ENCODE measurements at regions of chr9 and their contacts with region 1.

Region 1: DNA sequence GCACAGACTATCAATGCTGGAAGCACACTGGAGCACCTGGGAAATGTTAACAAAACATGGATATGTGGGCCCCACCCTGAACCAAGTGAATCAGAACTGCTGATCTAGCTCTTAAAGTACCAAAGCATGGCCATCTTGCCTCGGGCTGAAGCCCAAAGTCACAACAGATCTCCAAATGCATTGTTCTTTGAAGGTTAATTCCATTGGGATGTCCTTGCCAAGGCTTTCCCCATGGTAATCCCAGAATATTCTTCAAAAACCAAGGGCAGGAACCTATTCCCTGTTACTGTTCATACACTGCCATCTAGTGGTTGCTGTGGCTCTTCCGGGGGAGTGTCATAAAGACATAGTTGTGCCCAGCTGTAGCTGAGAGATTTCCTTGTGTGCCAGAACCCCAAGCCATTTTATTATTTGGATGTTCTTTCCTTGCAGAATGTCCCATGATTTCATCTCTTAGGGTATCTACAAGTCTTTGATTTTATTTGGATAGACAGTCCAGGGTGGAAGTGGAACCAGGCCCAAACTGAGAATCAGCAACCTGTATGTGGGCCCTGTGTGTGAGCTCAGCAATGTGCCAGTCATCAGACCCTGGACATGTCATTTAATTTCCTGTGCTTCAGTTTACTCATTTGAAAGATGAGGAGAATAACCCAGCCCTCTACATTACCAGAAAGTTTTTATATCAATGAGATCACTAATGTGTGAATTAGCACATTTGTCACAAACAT is 290.0 kb downstream of the ACTL7B start:
- DNase-seq: peak in 1 of 2 donors; percentile 47
- ATAC-seq: peak; percentile 87 to 94 (median 92)
- H3K4me3 ChIP-seq: no peak overlapping the region
- H3K27ac ChIP-seq: no peak overlapping the region
- H3K4me1 ChIP-seq: peaks cover 0 to 5% (median 0%) of the 10 kb centered on the region in 9 donors
- H3K27me3 ChIP-seq: peaks cover 0 to 8% (median 0%) of the 10 kb centered on the region in 7 donors
- CTCF ChIP-seq: peak; percentile 70 to 93 (median 86)

Region 2: DNA sequence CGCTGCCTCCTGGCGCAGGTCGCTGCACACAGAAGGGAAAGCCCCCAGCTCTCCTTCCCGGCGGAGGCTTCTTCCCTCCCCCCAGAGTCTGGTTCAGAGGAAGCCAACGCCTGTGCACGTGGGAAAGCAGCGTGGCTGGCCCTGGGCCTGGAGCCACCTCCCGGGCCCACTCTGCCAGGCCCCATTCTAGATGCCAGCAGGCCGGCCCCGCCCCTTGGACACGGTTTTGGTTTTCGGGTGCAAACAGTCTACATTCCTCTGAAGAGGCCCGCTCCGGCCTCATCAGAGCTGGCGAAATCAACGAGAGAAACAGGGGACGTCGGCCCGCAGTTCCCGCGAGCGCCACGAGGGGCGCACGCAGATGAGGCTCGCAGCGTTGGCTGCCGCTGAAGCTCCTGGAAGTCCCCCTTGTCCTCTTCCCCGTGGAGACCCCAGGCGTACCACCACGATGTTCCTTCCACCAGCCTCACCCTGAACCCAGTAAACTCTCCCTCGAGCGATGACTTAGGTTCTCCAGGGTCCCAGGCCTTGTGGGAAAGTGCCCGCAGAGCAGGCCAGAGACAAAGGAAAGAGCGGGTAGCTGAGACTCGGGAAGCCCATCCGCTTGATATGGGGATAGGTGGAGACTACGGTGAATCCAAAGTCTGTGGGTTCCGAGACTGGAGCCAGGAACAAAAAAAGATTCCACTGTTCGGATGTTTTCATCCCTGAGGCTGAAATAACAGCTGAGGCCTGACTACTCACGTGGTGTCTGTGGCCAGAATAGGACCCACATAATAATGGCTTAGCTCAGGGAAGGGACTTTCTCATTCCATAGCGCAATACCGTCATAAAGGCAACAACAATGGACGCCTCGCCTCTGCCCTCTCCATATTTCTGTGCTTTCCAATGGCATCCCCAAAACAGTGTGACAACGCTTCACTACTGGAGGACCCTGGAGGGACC is 1140.4 kb before region 1 on chr9:
- intact Hi-C with region 1: loop called in 3 of 10 experiments (anchors 10 kb)
- DNase-seq: peak; percentile 76 to 78
- ATAC-seq: peak; percentile 82 to 92 (median 90)
- H3K4me3 ChIP-seq: peak overlapping the region in 8 of 10 donors; percentile 13 to 49 (median 36)
- H3K27ac ChIP-seq: peak overlapping the region in 7 of 10 donors; percentile 1 to 67 (median 42)
- H3K4me1 ChIP-seq: peaks cover 0 to 28% (median 9%) of the 10 kb centered on the region in 9 donors
- H3K27me3 ChIP-seq: no peaks in the 10 kb centered on the region
- CTCF ChIP-seq: peak; percentile 91 to 99 (median 96)

Region 3: GRCh38 chr9:107465467-107466451 is 1100.1 kb before region 1 on chr9:
- intact Hi-C with region 1: loop called in 7 of 10 experiments (anchors 1 to 5 kb)
- DNase-seq: peak; percentile 55 to 80
- ATAC-seq: peak; percentile 97 to 99 (median 98)
- H3K4me3 ChIP-seq: peak overlapping the region; percentile 30 to 76 (median 64)
- H3K27ac ChIP-seq: peak overlapping the region in 6 of 10 donors; percentile 28 to 66 (median 53)
- H3K4me1 ChIP-seq: peaks cover 0 to 14% (median 6%) of the 10 kb centered on the region in 9 donors
- H3K27me3 ChIP-seq: peaks cover 0 to 20% (median 0%) of the 10 kb centered on the region in 7 donors
- CTCF ChIP-seq: peak; percentile 82 to 97 (median 94)

Region 4: DNA sequence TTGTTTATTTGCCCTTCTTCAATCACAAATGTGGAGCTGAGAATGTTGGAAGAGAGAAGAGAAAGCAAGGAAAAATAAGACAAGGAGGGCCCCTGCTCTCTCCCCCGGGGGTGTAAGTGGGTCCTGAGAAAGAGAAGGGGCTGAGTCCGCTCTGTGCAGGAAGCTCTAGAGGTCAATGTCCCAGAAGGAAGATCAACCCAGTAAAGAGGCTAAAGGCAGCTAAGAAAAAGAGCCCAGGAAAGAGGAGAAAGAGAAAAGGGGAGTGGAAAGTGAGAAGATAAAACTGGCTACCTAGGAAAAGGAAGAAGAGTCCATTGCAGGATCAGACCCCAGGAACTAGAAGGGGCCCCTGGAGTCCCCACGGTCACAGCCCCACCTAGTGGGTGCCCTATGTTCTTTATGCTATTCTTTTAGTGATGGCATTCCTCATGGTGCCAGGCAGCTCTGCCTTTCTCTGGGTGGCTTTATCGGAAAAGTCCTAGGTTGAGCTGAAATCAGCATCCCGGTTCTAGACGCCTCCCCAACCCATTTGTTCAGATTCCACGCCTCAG is 293.4 kb before region 1 on chr9:
- intact Hi-C with region 1: loop called in 3 of 10 experiments (anchors 10 kb)
- DNase-seq: peak; percentile 43 to 46
- ATAC-seq: peak; percentile 69 to 93 (median 86)
- H3K4me3 ChIP-seq: peak overlapping the region in 6 of 10 donors; percentile 1 to 42 (median 24)
- H3K27ac ChIP-seq: peak overlapping the region in 7 of 10 donors; percentile 10 to 71 (median 52)
- H3K4me1 ChIP-seq: peaks cover 0 to 23% (median 8%) of the 10 kb centered on the region in 9 donors
- H3K27me3 ChIP-seq: no peaks in the 10 kb centered on the region
- CTCF ChIP-seq: peak; percentile 49 to 76 (median 65)

Region 5: GRCh38 chr9:108297073-108297472 is 268.7 kb before region 1 on chr9:
- intact Hi-C with region 1: loop called in 1 of 10 experiments (anchors 10 kb)
- DNase-seq: no peak
- ATAC-seq: peak in 6 of 8 donors; percentile 22 to 70 (median 38)
- H3K4me3 ChIP-seq: no peak overlapping the region
- H3K27ac ChIP-seq: peak overlapping the region in 1 of 10 donors; percentile 26
- H3K4me1 ChIP-seq: peaks cover 0 to 13% (median 0%) of the 10 kb centered on the region in 9 donors
- H3K27me3 ChIP-seq: peaks cover 0 to 4% (median 0%) of the 10 kb centered on the region in 7 donors
- CTCF ChIP-seq: no peak

Region 6: DNA sequence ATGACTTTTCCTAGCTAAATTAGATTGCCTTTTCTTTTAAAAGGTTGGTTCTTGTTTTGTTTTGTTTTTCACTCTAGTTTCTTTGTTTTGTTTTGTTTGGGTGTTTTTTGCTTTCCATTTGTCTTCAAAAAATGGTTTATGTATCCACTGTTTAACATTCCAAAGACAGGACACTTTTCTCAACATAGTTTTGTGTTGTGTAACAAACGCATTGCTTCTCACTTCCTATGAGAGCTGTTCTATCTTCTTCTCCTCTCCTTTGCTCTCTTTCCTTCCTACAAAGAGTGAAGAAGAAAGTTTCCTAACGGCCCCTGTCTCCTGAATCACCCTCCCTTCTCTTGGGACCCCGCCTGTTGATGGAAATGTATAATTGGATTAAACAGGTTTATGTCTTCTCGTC is 249.7 kb before region 1 on chr9:
- intact Hi-C with region 1: no loop called
- DNase-seq: no peak
- ATAC-seq: no peak
- H3K4me3 ChIP-seq: no peak overlapping the region
- H3K27ac ChIP-seq: no peak overlapping the region
- H3K4me1 ChIP-seq: no peaks in the 10 kb centered on the region
- H3K27me3 ChIP-seq: no peaks in the 10 kb centered on the region
- CTCF ChIP-seq: no peak

Region 7: GRCh38 chr9:108473211-108474112 is 92.4 kb before region 1 on chr9:
- intact Hi-C with region 1: loop called in 1 of 10 experiments (anchors 5 kb)
- DNase-seq: no peak
- ATAC-seq: peak in 5 of 8 donors; percentile 45 to 78 (median 53)
- H3K4me3 ChIP-seq: no peak overlapping the region
- H3K27ac ChIP-seq: no peak overlapping the region
- H3K4me1 ChIP-seq: peaks cover 3 to 35% (median 18%) of the 10 kb centered on the region in 9 donors
- H3K27me3 ChIP-seq: no peaks in the 10 kb centered on the region
- CTCF ChIP-seq: no peak

Region 8: DNA sequence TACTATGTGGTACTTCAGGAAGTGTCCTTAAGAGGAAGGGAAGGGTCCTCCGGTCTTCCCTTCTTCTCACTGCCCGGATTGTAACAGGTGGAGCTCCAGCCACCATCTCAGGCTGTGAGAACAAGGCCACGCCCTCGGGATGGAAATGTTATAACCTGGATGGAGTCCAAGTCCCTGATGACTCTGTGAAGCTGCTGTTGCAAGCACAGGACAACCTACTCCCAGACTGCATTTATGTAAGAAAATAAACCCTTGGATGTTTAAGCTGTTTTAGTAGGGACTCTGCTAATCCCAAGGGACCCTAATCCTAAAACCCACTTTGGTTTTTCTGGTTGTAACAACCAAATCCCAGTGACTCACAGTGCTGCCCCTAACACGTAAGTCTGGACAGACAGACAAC is 68.4 kb after region 1 on chr9:
- intact Hi-C with region 1: no loop called
- DNase-seq: no peak
- ATAC-seq: peak in 1 of 8 donors; percentile 53
- H3K4me3 ChIP-seq: no peak overlapping the region
- H3K27ac ChIP-seq: no peak overlapping the region
- H3K4me1 ChIP-seq: no peaks in the 10 kb centered on the region
- H3K27me3 ChIP-seq: peaks cover 0 to under 1% (median 0%) of the 10 kb centered on the region in 7 donors
- CTCF ChIP-seq: no peak

Measured in heart right ventricle (tissue), 16 donors.